ENCODE measurements at regions of chr22 and their contacts with region 1.

Region 1: GRCh38 chr22:35150183-35151107 is 84.5 kb downstream of the ISX start:
- DNase-seq: peak; percentile 69
- H3K4me3 Mint-ChIP-seq: no peak overlapping the region
- H3K27ac Mint-ChIP-seq: no peak overlapping the region
- H3K4me1 Mint-ChIP-seq: no peaks in the 10 kb centered on the region
- H3K27me3 Mint-ChIP-seq: peaks cover 24% of the 10 kb centered on the region

Region 2: DNA sequence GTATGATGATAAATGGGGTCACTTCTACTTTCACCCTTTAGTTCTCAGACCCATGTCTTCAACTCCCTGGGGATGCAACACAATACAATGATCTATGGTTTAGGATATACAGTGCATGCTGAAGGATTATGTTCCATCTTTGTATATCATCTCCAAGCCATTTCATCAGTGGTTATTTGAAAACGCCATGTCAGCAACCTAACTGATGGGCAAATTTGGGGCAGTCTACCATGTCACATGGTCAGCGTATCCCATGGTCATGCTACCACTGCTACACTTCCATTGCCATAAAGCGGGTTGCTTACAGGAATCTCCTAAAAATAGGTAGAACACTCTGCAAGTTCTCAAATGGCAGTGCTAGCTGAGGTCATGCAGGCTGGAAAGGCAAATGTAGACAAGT is 321.0 kb before region 1 on chr22:
- CTCF ChIA-PET with region 1: no interaction called
- DNase-seq: no peak
- H3K4me3 Mint-ChIP-seq: no peak overlapping the region
- H3K27ac Mint-ChIP-seq: no peak overlapping the region
- H3K4me1 Mint-ChIP-seq: no peaks in the 10 kb centered on the region
- H3K27me3 Mint-ChIP-seq: no peaks in the 10 kb centered on the region

Region 3: GRCh38 chr22:34966980-34967565 is 183.4 kb before region 1 on chr22:
- CTCF ChIA-PET with region 1: no interaction called
- DNase-seq: no peak
- H3K4me3 Mint-ChIP-seq: no peak overlapping the region
- H3K27ac Mint-ChIP-seq: no peak overlapping the region
- H3K4me1 Mint-ChIP-seq: no peaks in the 10 kb centered on the region
- H3K27me3 Mint-ChIP-seq: no peaks in the 10 kb centered on the region

Region 4: GRCh38 chr22:35131525-35132000 is 18.9 kb before region 1 on chr22:
- CTCF ChIA-PET with region 1: interaction called, 10 read pairs
- DNase-seq: no peak
- H3K4me3 Mint-ChIP-seq: no peak overlapping the region
- H3K27ac Mint-ChIP-seq: no peak overlapping the region
- H3K4me1 Mint-ChIP-seq: peaks cover 5% of the 10 kb centered on the region
- H3K27me3 Mint-ChIP-seq: peaks cover 34% of the 10 kb centered on the region

Region 5: DNA sequence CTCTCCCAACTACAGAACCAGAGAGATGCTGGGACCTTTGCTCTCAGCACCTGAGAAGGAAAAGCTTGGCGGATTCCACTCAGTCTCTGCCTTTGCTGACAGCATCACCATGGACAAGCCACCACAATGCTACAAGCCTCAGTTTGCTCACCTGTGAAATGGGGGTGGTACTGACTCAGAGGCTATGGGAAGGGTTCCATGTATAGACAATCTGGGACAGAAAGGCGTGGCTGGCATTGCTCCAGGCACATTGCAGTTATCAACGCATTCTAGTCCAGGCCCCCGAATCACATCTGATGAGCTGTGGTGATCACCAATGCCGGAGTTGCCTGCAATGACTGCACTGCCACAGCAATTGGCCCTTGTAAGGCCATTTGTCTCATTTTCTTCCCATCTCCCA is 11.9 kb before region 1 on chr22:
- CTCF ChIA-PET with region 1: interaction called, 11 read pairs
- DNase-seq: no peak
- H3K4me3 Mint-ChIP-seq: no peak overlapping the region
- H3K27ac Mint-ChIP-seq: no peak overlapping the region
- H3K4me1 Mint-ChIP-seq: peaks cover 5% of the 10 kb centered on the region
- H3K27me3 Mint-ChIP-seq: peaks cover 25% of the 10 kb centered on the region